ENCODE measurements at regions of chr2 and their contacts with region 1.

Region 1: DNA sequence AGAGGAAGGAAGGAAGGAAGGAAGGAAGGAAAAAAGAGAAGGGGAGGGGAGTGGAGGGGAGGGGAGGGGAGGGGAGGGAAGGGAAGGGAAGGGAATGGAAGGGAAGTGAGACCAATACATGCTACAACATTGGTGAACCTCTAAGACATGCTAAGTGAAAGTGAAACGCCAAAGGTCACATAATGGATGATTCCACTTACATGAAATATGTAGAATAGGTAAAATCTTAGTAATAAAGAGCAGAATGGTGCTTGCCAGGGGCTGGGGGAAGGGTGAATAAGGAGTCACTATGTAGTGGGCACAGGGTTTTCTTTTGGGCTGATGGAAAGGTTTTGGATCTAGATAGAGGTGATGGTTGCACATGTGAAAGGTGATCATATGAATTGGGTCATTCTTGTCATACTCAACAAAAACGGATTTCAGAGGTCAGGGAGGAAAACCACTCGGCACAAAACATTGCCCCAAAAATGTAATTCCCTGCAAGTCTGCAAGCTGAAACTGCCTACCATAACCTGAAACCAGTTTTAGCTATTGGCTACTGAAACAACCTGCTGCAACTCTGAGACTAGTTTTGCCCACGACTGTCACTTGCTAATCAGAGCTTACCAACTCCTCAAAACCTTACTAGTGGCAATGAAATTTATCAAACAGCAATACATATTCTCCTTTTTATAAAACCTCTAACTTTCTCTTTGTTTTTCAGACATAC is 59.2 kb downstream of the CCDC141 start:
- DNase-seq: no peak
- H3K4me3 ChIP-seq: no peak overlapping the region
- H3K27ac ChIP-seq: no peak overlapping the region
- H3K4me1 ChIP-seq: no peaks in the 10 kb centered on the region
- H3K27me3 ChIP-seq: no peaks in the 10 kb centered on the region
- CTCF ChIP-seq: no peak
- POLR2A ChIP-seq: no peak

Region 2: GRCh38 chr2:177740700-177741099 is 1250.0 kb before region 1 on chr2:
- intact Hi-C with region 1: no loop called
- DNase-seq: no peak
- H3K4me3 ChIP-seq: no peak overlapping the region
- H3K27ac ChIP-seq: no peak overlapping the region
- H3K4me1 ChIP-seq: no peaks in the 10 kb centered on the region
- H3K27me3 ChIP-seq: no peaks in the 10 kb centered on the region
- CTCF ChIP-seq: no peak
- POLR2A ChIP-seq: no peak

Region 3: DNA sequence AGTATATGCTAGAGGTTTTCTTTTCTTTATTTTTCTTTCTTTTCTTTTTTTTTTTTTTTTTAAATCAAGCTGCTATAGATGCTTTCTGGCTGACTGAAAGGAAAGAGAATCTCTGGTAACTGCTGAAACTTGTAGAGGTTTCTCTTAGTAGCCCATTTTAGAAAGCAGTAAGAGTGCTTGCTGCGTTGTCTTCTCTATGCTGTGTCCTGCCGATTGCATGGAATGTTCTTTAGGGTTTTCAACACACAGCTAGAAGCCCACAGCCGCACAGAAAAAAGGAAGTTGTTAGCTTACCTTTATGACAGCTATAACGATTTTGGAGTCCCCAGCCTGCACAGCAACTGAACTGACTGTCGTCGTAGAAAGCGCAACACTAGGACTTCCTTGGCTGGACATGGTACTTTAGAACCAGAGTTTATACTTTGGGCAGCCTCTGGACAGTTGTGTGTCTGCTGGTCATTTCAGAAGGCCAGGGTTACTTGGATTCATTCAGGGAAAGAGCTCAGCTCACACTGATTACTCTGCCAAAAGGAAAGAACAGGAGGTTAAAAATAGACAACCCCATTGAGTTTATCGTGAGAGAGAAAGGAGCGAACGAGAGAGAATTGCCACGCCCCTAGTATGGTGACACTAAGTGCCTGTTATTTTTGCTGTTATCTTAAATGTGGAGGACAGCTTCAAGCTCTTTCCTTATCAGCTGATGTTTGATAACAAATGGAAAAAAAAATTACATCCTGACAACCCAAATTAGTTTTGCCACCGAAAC is 59.0 kb after region 1 on chr2 and contains the start of gene CCDC141:
- intact Hi-C with region 1: loop called (anchors 2 kb)
- DNase-seq: no peak
- H3K4me3 ChIP-seq: peak within 1 kb of the TSS in 2 of 3 donors; percentile 3 to 37
- H3K27ac ChIP-seq: no peak within 1 kb of the TSS
- H3K4me1 ChIP-seq: no peaks in the 10 kb centered on the region
- H3K27me3 ChIP-seq: no peaks in the 10 kb centered on the region
- CTCF ChIP-seq: no peak
- POLR2A ChIP-seq: no peak
- total RNA-seq, gene CCDC141: 1.3 to 11.7 (median 2.2) TPM

Measured in breast epithelium (tissue), 4 donors.